H1 (cell line): ENCODE measurements at regions of chr22 and their contacts with region 1.

Region 1: DNA sequence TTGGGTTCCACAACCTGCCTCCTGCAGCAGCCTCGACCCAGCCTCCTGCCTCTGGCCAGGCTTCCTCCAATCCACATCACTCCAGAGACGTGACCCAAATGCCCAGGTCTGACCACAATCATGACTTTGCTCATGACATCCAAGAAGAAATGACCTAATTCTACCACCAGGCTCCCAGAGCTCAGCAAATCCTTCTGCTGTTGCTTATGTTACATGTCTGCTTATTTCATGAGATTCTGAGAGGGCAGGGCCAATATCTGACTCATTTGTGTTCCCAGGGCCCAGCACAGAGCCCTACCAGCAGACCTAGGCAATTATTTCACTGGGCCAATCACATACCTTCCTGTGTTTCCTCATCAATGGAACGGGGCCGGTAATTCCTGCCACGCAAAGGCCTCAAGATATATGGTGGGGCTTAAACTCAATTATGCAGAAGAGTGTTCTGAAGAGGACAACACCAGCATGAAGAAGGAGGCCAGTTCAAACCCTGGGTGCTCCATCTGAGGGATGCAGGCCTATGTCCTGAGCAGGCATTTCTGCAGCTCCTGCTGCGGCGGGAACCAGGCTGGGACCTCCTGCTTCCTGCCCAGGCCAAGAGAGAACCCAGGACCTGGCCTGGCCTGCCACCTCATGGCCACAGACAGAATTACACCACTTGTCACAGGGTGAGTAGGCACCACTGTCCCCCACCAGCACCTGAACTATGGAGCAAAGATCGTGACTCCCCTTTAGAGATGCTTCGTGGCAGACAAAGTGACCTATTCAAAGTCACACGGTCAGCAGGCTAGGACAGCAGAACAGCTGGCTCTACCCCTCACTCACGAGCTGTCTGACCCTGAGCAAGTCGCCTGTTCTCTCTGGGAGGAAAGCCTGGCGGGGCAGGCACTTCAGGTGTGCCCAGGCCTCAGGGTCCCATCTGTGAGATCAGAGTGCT is 5.9 kb downstream of the CENPM start:
- DNase-seq: peak in 1 of 2 experiments; percentile 95
- H3K4me3 ChIP-seq: no peak overlapping the region
- H3K27ac ChIP-seq: no peak overlapping the region
- H3K4me1 ChIP-seq: peaks cover 4 to 7% (median 5%) of the 10 kb centered on the region in 4 experiments
- H3K27me3 ChIP-seq: no peaks in the 10 kb centered on the region
- CTCF ChIP-seq: peak; percentile 92 to 96 (median 95)
- EP300 ChIP-seq: no peak
- POLR2A ChIP-seq: no peak
- RAD21 ChIP-seq: peak; percentile 95 to 96

Region 2: GRCh38 chr22:41902932-41903421 is 38.1 kb before region 1 on chr22:
- CTCF ChIA-PET with region 1: interaction called, 20 read pairs
- POLR2A ChIA-PET with region 1: interaction called, 7 read pairs
- DNase-seq: no peak
- H3K4me3 ChIP-seq: no peak overlapping the region
- H3K27ac ChIP-seq: no peak overlapping the region
- H3K4me1 ChIP-seq: peaks cover 0 to 5% (median 3%) of the 10 kb centered on the region in 4 experiments; a peak in 3 of 7 replicates
- H3K27me3 ChIP-seq: peaks cover 0 to under 1% (median 0%) of the 10 kb centered on the region in 4 experiments; a peak in 2 of 7 replicates
- CTCF ChIP-seq: no peak
- EP300 ChIP-seq: no peak
- POLR2A ChIP-seq: no peak
- RAD21 ChIP-seq: no peak

Region 3: DNA sequence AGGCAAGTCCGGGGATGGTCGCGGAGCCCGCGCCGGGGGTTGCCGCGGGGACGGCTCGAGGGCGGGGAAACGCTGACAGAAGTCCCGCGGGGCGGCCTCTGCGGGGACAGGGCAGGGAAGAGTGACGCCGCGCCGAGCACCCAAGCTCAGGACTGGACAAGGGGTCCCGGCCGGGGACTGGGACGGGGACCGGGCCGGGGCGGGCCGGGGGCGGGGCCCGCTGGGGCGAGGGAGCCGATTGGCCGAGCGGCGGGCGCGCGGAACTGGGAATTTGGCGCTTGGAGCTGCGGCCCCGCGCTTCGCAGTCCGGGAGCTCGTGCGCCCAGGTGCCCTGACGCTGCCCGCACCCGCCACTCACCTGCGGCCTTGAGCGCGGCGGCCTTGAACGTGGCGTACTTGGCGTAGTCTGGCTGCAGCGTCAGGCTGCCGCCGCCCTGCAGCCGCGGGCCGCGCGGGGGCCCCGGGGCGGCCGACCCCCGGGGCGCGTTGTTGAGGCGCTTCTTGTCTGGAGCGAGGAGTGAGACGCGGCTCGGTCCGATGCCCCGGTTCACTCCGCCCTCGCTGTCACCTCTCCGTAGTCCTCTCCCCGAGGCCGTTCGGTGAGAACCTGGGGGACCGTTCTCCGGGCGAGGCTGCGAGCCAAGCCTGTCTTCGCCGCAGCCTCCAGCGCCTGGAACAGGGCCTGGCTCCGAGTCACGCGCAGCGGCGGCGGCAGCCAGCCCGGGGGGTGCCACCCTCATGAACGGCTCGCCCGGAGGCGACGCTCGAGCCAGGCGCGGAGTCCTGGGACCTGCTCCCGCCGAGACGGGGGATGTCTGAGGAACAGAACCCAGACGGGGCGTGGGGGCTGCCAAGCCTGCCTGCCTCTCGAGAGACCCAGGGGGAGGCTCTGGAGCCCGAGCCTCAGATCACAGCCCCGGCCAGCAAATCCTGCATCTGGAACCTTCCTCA is 30.8 kb before region 1 on chr22:
- CTCF ChIA-PET with region 1: interaction called, 20 read pairs
- POLR2A ChIA-PET with region 1: interaction called, 7 read pairs
- DNase-seq: peak in 1 of 2 experiments; percentile 78
- H3K4me3 ChIP-seq: peak overlapping the region in 1 of 4 experiments; percentile 55; a peak in 3 of 8 replicates
- H3K27ac ChIP-seq: no peak overlapping the region
- H3K4me1 ChIP-seq: peaks cover 0 to 29% (median 13%) of the 10 kb centered on the region in 4 experiments; a peak in 6 of 7 replicates
- H3K27me3 ChIP-seq: peaks cover 55 to 71% (median 67%) of the 10 kb centered on the region in 4 experiments
- CTCF ChIP-seq: no peak
- EP300 ChIP-seq: no peak
- POLR2A ChIP-seq: no peak
- RAD21 ChIP-seq: no peak

Region 4: GRCh38 chr22:41919357-41920224 is 21.5 kb before region 1 on chr22:
- CTCF ChIA-PET with region 1: interaction called, 77 read pairs
- POLR2A ChIA-PET with region 1: interaction called, 5 read pairs
- DNase-seq: peak; percentile 72 to 98
- H3K4me3 ChIP-seq: peak overlapping the region; percentile 33 to 67 (median 34)
- H3K27ac ChIP-seq: no peak overlapping the region
- H3K4me1 ChIP-seq: peaks cover 0 to 18% (median 8%) of the 10 kb centered on the region in 4 experiments; a peak in 5 of 7 replicates
- H3K27me3 ChIP-seq: peaks cover 30 to 82% (median 72%) of the 10 kb centered on the region in 4 experiments
- CTCF ChIP-seq: no peak
- EP300 ChIP-seq: no peak
- POLR2A ChIP-seq: peak in 1 of 2 experiments; percentile 36; a peak in 1 of 3 replicates
- RAD21 ChIP-seq: no peak

Region 5: GRCh38 chr22:41925655-41926460 is 15.2 kb before region 1 on chr22:
- CTCF ChIA-PET with region 1: interaction called, 77 read pairs
- POLR2A ChIA-PET with region 1: interaction called, 17 read pairs
- DNase-seq: peak in 1 of 2 experiments; percentile 95
- H3K4me3 ChIP-seq: peak overlapping the region; percentile 23 to 71 (median 31); a peak in 6 of 8 replicates
- H3K27ac ChIP-seq: no peak overlapping the region
- H3K4me1 ChIP-seq: peaks cover 0 to 24% (median 15%) of the 10 kb centered on the region in 4 experiments; a peak in 6 of 7 replicates
- H3K27me3 ChIP-seq: peaks cover 13 to 63% (median 46%) of the 10 kb centered on the region in 4 experiments
- CTCF ChIP-seq: peak; percentile 90 to 93 (median 91)
- EP300 ChIP-seq: no peak
- POLR2A ChIP-seq: 0 out of 3 replicates have a peak, but pooled peaks of 1 of the 2 experiments have one; percentile 22
- RAD21 ChIP-seq: peak; percentile 38 to 64